ENCODE measurements at regions of chr17 and their contacts with region 1.

Region 1: DNA sequence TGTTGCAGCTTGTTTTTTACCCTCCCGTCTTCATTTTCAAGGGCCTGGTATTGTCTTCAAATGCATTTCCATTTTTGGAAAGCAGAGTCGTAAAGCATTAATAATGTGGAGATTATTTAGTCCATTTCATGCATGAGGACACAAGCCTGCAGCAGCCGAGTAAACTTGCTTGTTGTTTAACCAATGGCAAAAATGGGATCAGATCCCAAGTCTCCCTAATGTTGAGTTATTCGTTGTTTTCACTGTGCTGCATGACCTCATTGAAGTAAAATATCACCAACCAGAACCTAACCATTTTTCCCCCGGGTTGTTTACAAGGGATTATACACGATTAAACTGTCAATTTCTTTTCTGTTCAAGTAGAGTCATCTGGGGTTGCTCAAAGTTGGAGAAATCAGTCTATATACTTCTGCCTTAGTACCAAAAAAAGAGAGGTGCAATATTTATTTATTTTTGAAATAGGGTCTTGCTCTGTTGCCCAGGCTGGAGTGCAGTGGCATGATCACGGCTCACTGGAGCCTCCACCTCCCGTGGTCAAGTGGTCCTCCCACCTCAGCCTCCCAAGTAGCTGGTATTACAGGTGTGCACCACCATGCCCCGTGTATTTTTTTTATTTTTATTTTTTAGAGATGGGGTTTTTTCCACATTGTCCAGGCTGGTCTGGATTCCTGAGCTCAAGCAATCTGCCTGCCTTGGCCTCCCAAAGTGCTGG is 12.4 kb downstream of the AMZ2 start:
- DNase-seq: no peak
- H3K4me3 ChIP-seq: no peak overlapping the region
- H3K4me3 Mint-ChIP-seq: peak overlapping the region in 1 of 2 donors; percentile 68
- H3K27ac ChIP-seq: no peak overlapping the region
- H3K27ac Mint-ChIP-seq: no peak overlapping the region
- H3K4me1 ChIP-seq: peaks cover 32 to 36% of the 10 kb centered on the region in 2 donors
- H3K4me1 Mint-ChIP-seq: peaks cover 55% of the 10 kb centered on the region
- H3K27me3 ChIP-seq: peaks cover 0 to 4% of the 10 kb centered on the region in 2 donors
- H3K27me3 Mint-ChIP-seq: peaks cover 6 to 9% (median 8%) of the 10 kb centered on the region in 3 donors
- CTCF ChIP-seq: no peak

Region 2: DNA sequence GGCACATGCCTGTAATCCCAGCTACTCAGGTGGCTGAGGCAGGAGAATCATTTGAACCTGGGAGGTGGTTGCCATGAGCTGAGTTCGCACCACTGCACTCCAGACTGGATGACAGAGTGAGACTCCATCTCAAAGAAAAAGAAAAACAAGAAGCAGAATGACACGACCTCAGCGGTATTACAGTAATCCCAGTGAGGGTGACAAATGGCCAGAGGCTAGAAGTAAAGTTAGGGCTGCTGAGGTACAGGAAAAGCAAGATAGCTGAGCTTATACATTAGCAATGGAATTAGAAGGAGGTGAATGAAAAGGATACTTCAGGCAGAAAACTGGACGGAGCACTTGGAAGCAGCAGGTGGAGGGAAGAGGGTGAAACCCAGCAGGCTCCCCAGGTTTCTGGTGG is 38.4 kb before region 1 on chr17:
- intact Hi-C with region 1: no loop called
- DNase-seq: no peak
- H3K4me3 ChIP-seq: no peak overlapping the region
- H3K4me3 Mint-ChIP-seq: no peak overlapping the region
- H3K27ac ChIP-seq: no peak overlapping the region
- H3K27ac Mint-ChIP-seq: peak overlapping the region in 1 of 7 donors; percentile 5
- H3K4me1 ChIP-seq: peaks cover 0 to 8% of the 10 kb centered on the region in 2 donors
- H3K4me1 Mint-ChIP-seq: peaks cover 8% of the 10 kb centered on the region
- H3K27me3 ChIP-seq: no peaks in the 10 kb centered on the region
- H3K27me3 Mint-ChIP-seq: peaks cover 1 to 2% (median 2%) of the 10 kb centered on the region in 3 donors
- CTCF ChIP-seq: no peak

Region 3: GRCh38 chr17:68310152-68310551 is 49.9 kb after region 1 on chr17:
- intact Hi-C with region 1: no loop called
- DNase-seq: peak; percentile 51 to 66 (median 61)
- H3K4me3 ChIP-seq: peak overlapping the region in 1 of 3 experiments; percentile 16
- H3K4me3 Mint-ChIP-seq: no peak overlapping the region
- H3K27ac ChIP-seq: peak overlapping the region; percentile 93 to 99
- H3K27ac Mint-ChIP-seq: peak overlapping the region; percentile 99 to 100 (median 100)
- H3K4me1 ChIP-seq: peaks cover 64 to 69% of the 10 kb centered on the region in 2 donors
- H3K4me1 Mint-ChIP-seq: peaks cover 63% of the 10 kb centered on the region
- H3K27me3 ChIP-seq: no peaks in the 10 kb centered on the region
- H3K27me3 Mint-ChIP-seq: peaks cover 0 to 5% (median 2%) of the 10 kb centered on the region in 3 donors
- CTCF ChIP-seq: no peak

Region 4: GRCh38 chr17:68435876-68436842 is 176.0 kb after region 1 on chr17:
- intact Hi-C with region 1: loop called (anchors 5 kb)
- DNase-seq: peak; percentile 65 to 76 (median 73)
- H3K4me3 ChIP-seq: no peak overlapping the region
- H3K4me3 Mint-ChIP-seq: peak overlapping the region; percentile 13 to 59
- H3K27ac ChIP-seq: no peak overlapping the region
- H3K27ac Mint-ChIP-seq: peak overlapping the region; percentile 8 to 80 (median 52)
- H3K4me1 ChIP-seq: peaks cover 45 to 50% of the 10 kb centered on the region in 2 donors
- H3K4me1 Mint-ChIP-seq: peaks cover 46% of the 10 kb centered on the region
- H3K27me3 ChIP-seq: no peaks in the 10 kb centered on the region
- H3K27me3 Mint-ChIP-seq: peaks cover 0 to 3% (median 1%) of the 10 kb centered on the region in 3 donors
- CTCF ChIP-seq: peak; percentile 89

Measured in CD14-positive monocyte (primary cell).